ENCODE measurements at regions of chr12 and their contacts with region 1.

Region 1: GRCh38 chr12:63843721-63844390 is 644 bp upstream of the SRGAP1 start:
- DNase-seq: peak; percentile 99

Region 2: DNA sequence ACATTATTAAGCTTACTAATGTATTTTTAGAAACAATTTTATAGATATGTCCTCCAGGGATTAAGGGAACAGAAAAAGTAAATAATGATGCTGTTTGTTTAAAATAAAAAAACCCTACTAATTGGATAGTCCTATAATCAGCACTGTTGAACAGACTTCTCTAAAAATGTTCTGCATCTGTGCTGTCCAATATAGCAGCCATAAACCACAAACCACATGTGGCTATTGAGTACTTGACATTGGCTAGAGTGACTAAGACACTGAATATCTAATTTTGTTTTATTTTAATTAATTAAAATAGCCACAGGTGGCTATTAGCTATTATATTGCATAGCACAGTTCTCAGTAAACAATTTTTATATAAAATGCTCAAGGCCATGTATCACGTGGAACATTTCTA is 386.0 kb before region 1 on chr12:
- in situ Hi-C with region 1: no loop called
- DNase-seq: no peak

Region 3: GRCh38 chr12:64077922-64078321 is 234.1 kb after region 1 on chr12:
- in situ Hi-C with region 1: no loop called
- DNase-seq: no peak

Region 4: DNA sequence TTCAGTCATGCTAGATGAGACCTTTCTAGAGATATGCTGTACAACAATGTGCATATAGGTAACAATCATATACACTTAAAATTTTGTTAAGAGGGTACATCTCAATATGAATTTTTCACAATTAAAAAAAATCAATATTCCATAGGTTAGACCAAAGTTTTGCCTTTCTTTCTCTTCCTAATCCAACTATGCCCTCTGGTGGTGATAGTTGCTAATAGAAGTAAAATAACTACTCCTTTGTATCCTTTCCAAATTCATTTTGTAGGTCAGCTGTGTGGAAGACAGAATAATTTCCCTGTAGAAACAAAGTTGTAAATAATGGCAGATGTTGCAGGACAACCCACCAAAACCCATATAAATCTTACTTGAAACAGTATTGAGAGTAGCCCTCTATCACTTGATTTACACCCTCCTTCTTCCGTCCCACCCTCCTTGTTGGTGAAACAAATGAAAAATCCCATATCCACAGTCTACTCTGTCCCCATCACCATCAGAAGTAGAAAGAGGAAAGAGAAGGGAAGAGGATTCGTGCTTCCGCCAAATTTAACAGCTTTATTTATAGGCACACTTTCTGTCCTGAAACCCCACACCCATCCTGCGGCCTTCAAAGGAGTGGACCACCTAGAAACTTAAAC is 412.4 kb after region 1 on chr12:
- in situ Hi-C with region 1: loop called (anchors 25 kb)
- DNase-seq: peak; percentile 61